B cell (primary cell): ENCODE measurements at regions of chr9 and their contacts with region 1.

Region 1: GRCh38 chr9:34365282-34365681 is 11.4 kb downstream of the MYORG start:
- DNase-seq: no peak
- ATAC-seq: no peak
- H3K4me3 ChIP-seq: no peak overlapping the region
- H3K4me3 Mint-ChIP-seq: no peak overlapping the region
- H3K27ac ChIP-seq: no peak overlapping the region
- H3K27ac Mint-ChIP-seq: no peak overlapping the region
- H3K4me1 ChIP-seq: no peaks in the 10 kb centered on the region
- H3K4me1 Mint-ChIP-seq: no peaks in the 10 kb centered on the region
- H3K27me3 ChIP-seq: no peaks in the 10 kb centered on the region
- H3K27me3 Mint-ChIP-seq: no peaks in the 10 kb centered on the region
- CTCF ChIP-seq: no peak

Region 2: GRCh38 chr9:33489066-33489465 is 876.2 kb before region 1 on chr9:
- CTCF ChIA-PET with region 1: no interaction called
- POLR2A ChIA-PET with region 1: no interaction called
- intact Hi-C with region 1: no loop called
- DNase-seq: no peak
- ATAC-seq: no peak
- H3K4me3 ChIP-seq: no peak overlapping the region
- H3K4me3 Mint-ChIP-seq: no peak overlapping the region
- H3K27ac ChIP-seq: no peak overlapping the region
- H3K27ac Mint-ChIP-seq: no peak overlapping the region
- H3K4me1 ChIP-seq: no peaks in the 10 kb centered on the region
- H3K4me1 Mint-ChIP-seq: no peaks in the 10 kb centered on the region
- H3K27me3 ChIP-seq: no peaks in the 10 kb centered on the region
- H3K27me3 Mint-ChIP-seq: peaks cover 4% of the 10 kb centered on the region
- CTCF ChIP-seq: no peak

Region 3: GRCh38 chr9:33510264-33511183 is 854.8 kb before region 1 on chr9:
- CTCF ChIA-PET with region 1: no interaction called
- POLR2A ChIA-PET with region 1: no interaction called
- intact Hi-C with region 1: no loop called
- DNase-seq: peak; percentile 43
- ATAC-seq: peak; percentile 43
- H3K4me3 ChIP-seq: peak overlapping the region; percentile 38 to 84 (median 61)
- H3K4me3 Mint-ChIP-seq: peak overlapping the region; percentile 94
- H3K27ac ChIP-seq: peak overlapping the region in 1 of 2 donors; percentile 25
- H3K27ac Mint-ChIP-seq: peak overlapping the region; percentile 46
- H3K4me1 ChIP-seq: no peaks in the 10 kb centered on the region
- H3K4me1 Mint-ChIP-seq: peaks cover 5% of the 10 kb centered on the region
- H3K27me3 ChIP-seq: peaks cover 0 to 10% (median 1%) of the 10 kb centered on the region in 4 experiments
- H3K27me3 Mint-ChIP-seq: peaks cover 8% of the 10 kb centered on the region
- CTCF ChIP-seq: no peak

Region 4: GRCh38 chr9:34171753-34172535 is 193.3 kb before region 1 on chr9:
- CTCF ChIA-PET with region 1: no interaction called
- POLR2A ChIA-PET with region 1: no interaction called
- intact Hi-C with region 1: no loop called
- DNase-seq: peak; percentile 86
- ATAC-seq: peak; percentile 99
- H3K4me3 ChIP-seq: peak overlapping the region in 1 of 5 experiments; percentile 10
- H3K4me3 Mint-ChIP-seq: peak overlapping the region; percentile 43
- H3K27ac ChIP-seq: no peak overlapping the region
- H3K27ac Mint-ChIP-seq: peak overlapping the region; percentile 12
- H3K4me1 ChIP-seq: peaks cover 10 to 13% of the 10 kb centered on the region in 2 donors
- H3K4me1 Mint-ChIP-seq: peaks cover 5% of the 10 kb centered on the region
- H3K27me3 ChIP-seq: peaks cover 0 to 31% (median 2%) of the 10 kb centered on the region in 4 experiments
- H3K27me3 Mint-ChIP-seq: no peaks in the 10 kb centered on the region
- CTCF ChIP-seq: no peak

Region 5: GRCh38 chr9:34346873-34347799 is 18.1 kb before region 1 on chr9:
- CTCF ChIA-PET with region 1: no interaction called
- POLR2A ChIA-PET with region 1: interaction called, 12 read pairs
- intact Hi-C with region 1: no loop called
- DNase-seq: no peak
- ATAC-seq: no peak
- H3K4me3 ChIP-seq: no peak overlapping the region
- H3K4me3 Mint-ChIP-seq: no peak overlapping the region
- H3K27ac ChIP-seq: no peak overlapping the region
- H3K27ac Mint-ChIP-seq: no peak overlapping the region
- H3K4me1 ChIP-seq: no peaks in the 10 kb centered on the region
- H3K4me1 Mint-ChIP-seq: no peaks in the 10 kb centered on the region
- H3K27me3 ChIP-seq: no peaks in the 10 kb centered on the region
- H3K27me3 Mint-ChIP-seq: no peaks in the 10 kb centered on the region
- CTCF ChIP-seq: no peak

Region 6: GRCh38 chr9:34646211-34647083 is 281.2 kb after region 1 on chr9 and contains the start of gene GALT:
- CTCF ChIA-PET with region 1: no interaction called
- POLR2A ChIA-PET with region 1: no interaction called
- intact Hi-C with region 1: no loop called
- DNase-seq: peak; percentile 95
- ATAC-seq: peak; percentile 97
- H3K4me3 ChIP-seq: peak within 1 kb of the TSS; percentile 79 to 98 (median 87)
- H3K4me3 Mint-ChIP-seq: peak within 1 kb of the TSS; percentile 97
- H3K27ac ChIP-seq: peak within 1 kb of the TSS; percentile 47 to 64
- H3K27ac Mint-ChIP-seq: peak within 1 kb of the TSS; percentile 94
- H3K4me1 ChIP-seq: peaks cover 16 to 17% of the 10 kb centered on the region in 2 donors
- H3K4me1 Mint-ChIP-seq: peaks cover 28% of the 10 kb centered on the region
- H3K27me3 ChIP-seq: no peaks in the 10 kb centered on the region
- H3K27me3 Mint-ChIP-seq: no peaks in the 10 kb centered on the region
- CTCF ChIP-seq: peak; percentile 62
- total RNA-seq, gene GALT: 96.6 and 111 TPM in 2 replicates